ENCODE measurements at regions of chr1 and their contacts with region 1.

Region 1: DNA sequence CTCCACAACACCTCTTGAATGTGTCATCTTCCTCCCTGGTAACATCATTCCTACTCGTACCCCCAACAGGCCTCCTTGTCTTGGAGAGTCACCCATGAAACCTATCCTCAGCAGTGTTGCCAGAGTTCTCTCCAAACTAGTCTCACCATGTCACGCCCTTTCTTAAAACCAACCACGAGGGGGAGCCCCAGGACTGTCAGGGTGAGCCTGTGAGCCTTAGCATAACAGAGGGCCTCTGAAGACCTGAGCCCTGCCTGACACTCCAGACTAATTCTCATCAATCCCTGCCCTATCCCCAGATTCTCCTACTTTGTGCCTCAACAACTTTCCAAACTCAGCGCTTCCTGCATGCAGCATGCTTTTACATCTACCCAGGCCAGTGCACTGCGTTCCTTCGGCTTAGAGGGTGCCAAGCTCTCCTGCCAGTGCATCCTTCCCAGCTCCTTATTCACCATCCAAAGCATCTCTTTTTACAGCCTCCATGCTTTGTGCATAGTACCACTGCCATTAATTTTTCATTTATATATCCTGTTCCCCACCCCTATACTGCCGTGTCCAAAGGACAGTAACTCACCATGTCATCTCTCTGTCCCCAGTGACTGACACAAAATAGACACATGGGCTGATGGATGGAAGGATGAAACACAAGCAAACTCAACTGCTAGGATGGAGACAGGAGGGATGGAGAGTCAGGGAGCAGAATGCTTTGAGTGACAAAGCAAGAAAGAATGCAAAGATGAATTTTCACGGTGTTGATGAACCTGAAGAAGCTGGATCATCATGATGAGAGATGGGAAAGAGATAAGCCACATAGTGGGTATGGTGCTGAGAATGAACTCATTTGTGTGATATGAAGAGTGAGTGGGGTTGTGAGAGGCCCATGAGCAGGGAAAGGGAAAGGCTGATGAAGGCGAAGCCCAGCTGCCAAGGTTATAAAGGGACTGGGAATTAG is 34.0 kb downstream of the ZNF697 start:
- DNase-seq: peak; percentile 77 to 86
- H3K4me3 ChIP-seq: no peak overlapping the region
- H3K4me3 Mint-ChIP-seq: no peak overlapping the region
- H3K27ac Mint-ChIP-seq: no peak overlapping the region
- H3K4me1 ChIP-seq: no peaks in the 10 kb centered on the region
- H3K4me1 Mint-ChIP-seq: peaks cover 6% of the 10 kb centered on the region
- H3K27me3 ChIP-seq: no peaks in the 10 kb centered on the region
- H3K27me3 Mint-ChIP-seq: no peaks in the 10 kb centered on the region
- CTCF ChIP-seq: peak; percentile 50 to 54

Region 2: DNA sequence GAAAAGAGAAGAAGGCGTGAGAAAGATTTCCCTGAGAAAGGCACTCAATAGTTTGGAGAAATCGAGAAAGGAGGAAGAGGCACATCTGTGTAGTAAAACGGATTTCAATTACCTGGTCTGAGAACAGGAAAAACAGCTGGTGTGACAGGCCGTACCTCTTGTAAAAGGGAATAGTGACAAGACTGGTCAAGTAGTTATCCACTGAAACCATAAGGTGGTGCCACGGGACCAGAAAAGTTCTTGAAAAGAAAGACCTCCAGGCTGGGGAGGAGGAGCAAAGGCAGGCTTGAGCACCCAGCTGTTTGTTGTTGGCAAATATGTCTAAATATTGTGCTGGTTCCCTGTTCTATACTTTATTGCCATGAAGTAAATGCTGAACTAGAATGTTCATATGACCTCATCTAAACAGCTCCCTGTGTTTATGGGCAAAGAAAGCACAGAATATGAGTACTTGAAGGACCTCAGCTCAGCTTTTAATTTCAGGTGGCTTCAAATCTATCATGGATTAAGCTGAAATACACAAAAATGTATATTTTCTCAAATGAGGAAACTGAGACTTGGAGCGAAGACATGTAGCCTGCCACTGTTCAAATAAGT is 241.5 kb before region 1 on chr1:
- CTCF ChIA-PET with region 1: interaction called, 3 read pairs
- POLR2A ChIA-PET with region 1: no interaction called
- intact Hi-C with region 1: loop called (anchors 5 kb)
- DNase-seq: peak; percentile 53 to 65
- H3K4me3 ChIP-seq: no peak overlapping the region
- H3K4me3 Mint-ChIP-seq: no peak overlapping the region
- H3K27ac Mint-ChIP-seq: no peak overlapping the region
- H3K4me1 ChIP-seq: no peaks in the 10 kb centered on the region
- H3K4me1 Mint-ChIP-seq: peaks cover 12% of the 10 kb centered on the region
- H3K27me3 ChIP-seq: no peaks in the 10 kb centered on the region
- H3K27me3 Mint-ChIP-seq: no peaks in the 10 kb centered on the region
- CTCF ChIP-seq: peak; percentile 34 to 36

Region 3: DNA sequence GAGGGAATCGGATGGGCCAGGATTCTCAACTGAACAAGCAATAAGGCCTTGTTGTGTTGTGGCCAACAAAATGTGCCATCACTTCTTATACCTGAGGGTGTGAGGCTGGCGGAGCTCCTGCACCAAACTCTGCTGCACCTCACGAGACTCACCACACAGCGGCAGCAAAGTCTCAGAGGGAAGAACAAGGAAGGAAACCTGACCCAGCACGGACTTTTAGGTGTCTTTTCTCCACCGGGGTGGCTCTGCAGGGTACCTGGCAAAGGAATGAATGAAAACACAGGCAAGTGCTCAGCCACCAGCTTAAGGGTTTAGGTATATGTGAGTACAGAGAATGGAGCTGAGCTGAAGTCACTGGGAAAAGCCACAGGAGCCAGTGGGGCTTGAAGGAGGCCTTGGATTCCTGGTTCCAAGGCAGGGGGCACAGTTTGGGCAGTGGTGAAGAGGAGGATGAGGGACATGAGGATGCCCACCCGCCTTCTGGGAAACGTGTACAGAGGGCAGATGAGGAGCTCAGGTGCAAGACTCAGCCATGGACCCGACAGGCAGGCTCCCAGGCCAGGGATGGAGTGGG is 138.1 kb before region 1 on chr1:
- CTCF ChIA-PET with region 1: interaction called, 3 read pairs
- POLR2A ChIA-PET with region 1: no interaction called
- intact Hi-C with region 1: loop called (anchors 1 kb)
- DNase-seq: peak; percentile 81
- H3K4me3 ChIP-seq: no peak overlapping the region
- H3K4me3 Mint-ChIP-seq: peak overlapping the region; percentile 31
- H3K27ac Mint-ChIP-seq: peak overlapping the region; percentile 80
- H3K4me1 ChIP-seq: 0 out of 2 replicates have a peak, but pooled peaks cover 8% of the 10 kb centered on the region
- H3K4me1 Mint-ChIP-seq: peaks cover 29% of the 10 kb centered on the region
- H3K27me3 ChIP-seq: no peaks in the 10 kb centered on the region
- H3K27me3 Mint-ChIP-seq: no peaks in the 10 kb centered on the region
- CTCF ChIP-seq: peak; percentile 51 to 78

Region 4: DNA sequence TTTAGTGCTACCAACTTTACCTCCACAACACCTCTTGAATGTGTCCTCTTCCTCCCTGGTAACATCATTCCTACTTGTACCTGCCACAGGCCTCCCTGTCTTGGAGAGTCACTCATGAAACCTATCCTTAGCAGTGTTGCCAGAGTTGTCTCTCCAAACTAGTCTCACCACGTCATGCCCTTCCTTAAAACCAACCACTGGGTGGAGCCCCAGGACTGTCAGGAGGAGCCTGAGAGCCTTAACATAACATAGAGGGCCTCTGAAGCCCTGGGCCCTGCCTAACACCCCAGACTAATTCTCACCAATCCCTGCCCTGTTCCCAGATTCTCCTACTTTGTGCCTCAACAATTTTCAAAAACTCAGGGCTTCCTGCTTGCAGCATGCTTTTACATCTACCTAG is 31.2 kb before region 1 on chr1:
- CTCF ChIA-PET with region 1: no interaction called
- POLR2A ChIA-PET with region 1: no interaction called
- intact Hi-C with region 1: loop called (anchors 1 kb)
- DNase-seq: peak; percentile 68 to 69
- H3K4me3 ChIP-seq: no peak overlapping the region
- H3K4me3 Mint-ChIP-seq: no peak overlapping the region
- H3K27ac Mint-ChIP-seq: no peak overlapping the region
- H3K4me1 ChIP-seq: no peaks in the 10 kb centered on the region
- H3K4me1 Mint-ChIP-seq: no peaks in the 10 kb centered on the region
- H3K27me3 ChIP-seq: no peaks in the 10 kb centered on the region
- H3K27me3 Mint-ChIP-seq: no peaks in the 10 kb centered on the region
- CTCF ChIP-seq: peak; percentile 29 to 51

Region 5: DNA sequence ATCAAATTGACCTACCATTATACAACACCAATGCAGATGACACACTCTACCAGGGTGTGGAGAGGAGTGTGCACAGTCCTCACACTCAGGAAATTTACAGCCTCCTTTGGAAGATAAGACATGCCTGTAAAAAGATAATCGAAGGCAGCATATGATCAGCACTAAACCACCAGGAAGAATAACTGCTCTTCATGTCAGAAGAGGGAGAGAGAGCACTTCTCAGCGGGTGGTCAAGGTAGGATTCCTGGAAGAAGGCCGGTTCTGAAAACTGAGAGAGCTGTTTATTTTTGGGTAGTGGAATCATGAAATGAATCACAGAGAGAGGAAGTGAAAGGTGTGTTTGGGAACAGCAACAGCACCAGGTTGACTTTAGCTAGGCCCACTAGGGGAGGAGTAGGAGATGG is 48.0 kb after region 1 on chr1:
- CTCF ChIA-PET with region 1: interaction called, 6 read pairs
- POLR2A ChIA-PET with region 1: no interaction called
- intact Hi-C with region 1: loop called (anchors 1 kb)
- DNase-seq: no peak
- H3K4me3 ChIP-seq: no peak overlapping the region
- H3K4me3 Mint-ChIP-seq: no peak overlapping the region
- H3K27ac Mint-ChIP-seq: no peak overlapping the region
- H3K4me1 ChIP-seq: peaks cover 22% of the 10 kb centered on the region
- H3K4me1 Mint-ChIP-seq: peaks cover 32% of the 10 kb centered on the region
- H3K27me3 ChIP-seq: no peaks in the 10 kb centered on the region
- H3K27me3 Mint-ChIP-seq: no peaks in the 10 kb centered on the region
- CTCF ChIP-seq: no peak

Region 6: GRCh38 chr1:119727996-119728395 is 114.0 kb after region 1 on chr1:
- CTCF ChIA-PET with region 1: no interaction called
- POLR2A ChIA-PET with region 1: no interaction called
- intact Hi-C with region 1: loop called (anchors 5 kb)
- DNase-seq: no peak
- H3K4me3 ChIP-seq: no peak overlapping the region
- H3K4me3 Mint-ChIP-seq: no peak overlapping the region
- H3K27ac Mint-ChIP-seq: no peak overlapping the region
- H3K4me1 ChIP-seq: no peaks in the 10 kb centered on the region
- H3K4me1 Mint-ChIP-seq: peaks cover 7% of the 10 kb centered on the region
- H3K27me3 ChIP-seq: no peaks in the 10 kb centered on the region
- H3K27me3 Mint-ChIP-seq: no peaks in the 10 kb centered on the region
- CTCF ChIP-seq: no peak

Measured in Caco-2 (cell line).